A549 (cell line): ENCODE measurements at regions of chr15 and their contacts with region 1.

Region 1: DNA sequence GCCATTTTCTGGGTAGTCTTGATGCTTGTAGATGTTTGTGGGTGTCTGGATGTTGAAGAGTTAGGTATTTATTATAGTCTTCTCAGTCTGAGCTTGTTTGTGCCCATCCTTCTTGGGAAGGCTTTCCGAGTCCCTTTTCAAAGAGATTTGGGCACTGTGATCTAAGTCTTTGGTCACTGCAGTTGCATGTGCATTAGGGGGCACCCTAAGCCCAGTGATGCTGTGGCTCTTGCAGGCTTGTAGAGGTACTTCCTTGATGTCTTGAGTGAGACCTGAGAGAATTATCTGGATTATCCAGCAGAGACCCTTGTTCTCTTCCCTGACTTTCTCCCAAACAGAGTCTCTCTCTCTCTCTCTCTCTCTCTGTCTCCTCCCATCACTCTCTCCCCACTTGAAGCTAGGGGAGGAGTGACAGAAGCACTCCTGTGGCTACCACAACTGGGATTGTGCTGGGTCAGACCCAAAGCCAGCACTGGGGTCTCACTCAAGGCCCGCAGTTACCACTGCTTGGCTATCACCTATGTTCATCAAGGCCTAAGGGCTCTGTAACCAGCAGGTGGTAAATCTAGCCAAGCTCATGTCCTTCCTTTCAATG is 68.5 kb downstream of the TMCO5A start:
- DNase-seq: peak in 1 of 2 experiments; percentile 66
- ATAC-seq: peak; percentile 77 to 84; a peak in 5 of 6 replicates
- H3K4me3 ChIP-seq: no peak overlapping the region
- H3K27ac ChIP-seq: no peak overlapping the region
- H3K4me1 ChIP-seq: no peaks in the 10 kb centered on the region
- CTCF ChIP-seq: peak; percentile 39
- EP300 ChIP-seq: no peak
- POLR2A ChIP-seq: no peak
- RAD21 ChIP-seq: peak; percentile 67 to 77

Region 2: GRCh38 chr15:38354315-38354929 is 351.4 kb after region 1 on chr15:
- CTCF ChIA-PET with region 1: interaction called, 14 read pairs
- POLR2A ChIA-PET with region 1: no interaction called
- DNase-seq: peak; percentile 20 to 66
- ATAC-seq: peak; percentile 74 to 81; a peak in 5 of 6 replicates
- H3K4me3 ChIP-seq: no peak overlapping the region
- H3K27ac ChIP-seq: no peak overlapping the region
- H3K4me1 ChIP-seq: no peaks in the 10 kb centered on the region
- CTCF ChIP-seq: peak; percentile 68
- EP300 ChIP-seq: no peak
- POLR2A ChIP-seq: no peak
- RAD21 ChIP-seq: peak; percentile 78 to 81

Region 3: GRCh38 chr15:38374556-38374955 is 371.6 kb after region 1 on chr15:
- CTCF ChIA-PET with region 1: interaction called, 12 read pairs
- POLR2A ChIA-PET with region 1: no interaction called
- DNase-seq: no peak
- ATAC-seq: no peak
- H3K4me3 ChIP-seq: no peak overlapping the region
- H3K27ac ChIP-seq: no peak overlapping the region
- H3K4me1 ChIP-seq: no peaks in the 10 kb centered on the region
- CTCF ChIP-seq: no peak
- EP300 ChIP-seq: no peak
- POLR2A ChIP-seq: no peak
- RAD21 ChIP-seq: no peak

Region 4: GRCh38 chr15:38389924-38390542 is 387.1 kb after region 1 on chr15:
- CTCF ChIA-PET with region 1: interaction called, 18 read pairs
- POLR2A ChIA-PET with region 1: no interaction called
- DNase-seq: peak; percentile 13 to 50
- ATAC-seq: peak; percentile 59 to 81; a peak in 5 of 6 replicates
- H3K4me3 ChIP-seq: no peak overlapping the region
- H3K27ac ChIP-seq: no peak overlapping the region
- H3K4me1 ChIP-seq: no peaks in the 10 kb centered on the region
- CTCF ChIP-seq: peak; percentile 60
- EP300 ChIP-seq: no peak
- POLR2A ChIP-seq: no peak
- RAD21 ChIP-seq: peak; percentile 57 to 60